GM12878 (cell line): ENCODE measurements at regions of chr22 and their contacts with region 1.

Region 1: DNA sequence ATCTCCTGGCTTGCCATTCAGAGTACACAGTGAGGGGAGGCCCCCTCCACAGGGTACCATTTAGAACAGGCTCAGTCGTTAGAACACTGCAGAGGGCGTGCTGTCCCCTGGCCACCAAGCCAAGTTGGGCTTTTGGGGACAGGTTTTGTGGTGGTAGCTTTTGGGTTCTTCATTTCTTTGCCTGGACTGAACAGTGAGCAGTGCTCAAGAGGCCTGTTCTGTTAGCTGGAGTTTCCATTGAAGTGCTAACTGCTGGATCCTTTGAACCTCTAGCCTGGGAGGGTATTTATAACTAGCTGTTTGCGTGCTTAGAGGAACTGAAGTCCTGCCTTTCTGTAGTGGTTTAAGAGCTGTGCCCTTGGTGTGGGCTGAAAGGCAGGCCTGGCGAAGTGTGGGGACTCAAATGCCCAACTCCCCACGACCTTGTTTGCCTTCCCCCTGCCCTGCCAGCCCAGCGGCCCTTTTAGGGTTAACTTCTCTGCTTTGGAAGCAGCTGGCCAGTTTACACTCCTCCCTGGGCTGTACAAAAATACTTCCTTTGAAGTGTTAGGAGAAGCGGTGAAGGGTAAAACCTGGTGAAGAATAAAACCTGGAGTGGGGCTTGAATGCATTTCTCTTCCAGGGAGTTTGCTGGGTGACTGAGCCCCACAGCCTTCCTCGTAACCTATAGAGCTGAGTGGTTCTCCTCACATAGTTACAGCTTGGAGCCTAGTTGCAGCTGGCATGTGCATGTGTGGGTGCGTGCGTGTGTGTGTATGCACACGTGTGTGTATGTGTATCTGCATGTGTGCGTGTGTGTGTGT is 34.6 kb downstream of the ZNRF3 start:
- DNase-seq: no peak
- ATAC-seq: peak; percentile 27
- H3K4me3 ChIP-seq: no peak overlapping the region
- H3K27ac ChIP-seq: no peak overlapping the region
- H3K4me1 ChIP-seq: peaks cover 8% of the 10 kb centered on the region
- H3K27me3 ChIP-seq: no peaks in the 10 kb centered on the region; a peak in 1 of 4 replicates
- CTCF ChIP-seq: no peak; a peak in 1 of 6 replicates
- EP300 ChIP-seq: no peak
- POLR2A ChIP-seq: no peak
- RAD21 ChIP-seq: no peak

Region 2: GRCh38 chr22:28855355-28856094 is 62.4 kb before region 1 on chr22:
- CTCF ChIA-PET with region 1: interaction called, 12 read pairs
- POLR2A ChIA-PET with region 1: no interaction called
- RAD21 ChIA-PET with region 1: interaction called, 4 read pairs
- SMC1A ChIA-PET with region 1: interaction called, 7 read pairs
- in situ Hi-C with region 1: no loop called
- intact Hi-C with region 1: no loop called
- DNase-seq: peak; percentile 27
- ATAC-seq: peak; percentile 79
- H3K4me3 ChIP-seq: no peak overlapping the region
- H3K27ac ChIP-seq: no peak overlapping the region
- H3K4me1 ChIP-seq: no peaks in the 10 kb centered on the region
- H3K27me3 ChIP-seq: no peaks in the 10 kb centered on the region; a peak in 1 of 4 replicates
- CTCF ChIP-seq: peak; percentile 85 to 90 (median 87); a peak in 5 of 6 replicates
- EP300 ChIP-seq: no peak
- POLR2A ChIP-seq: no peak
- RAD21 ChIP-seq: peak; percentile 94

Region 3: GRCh38 chr22:28904211-28904896 is 13.6 kb before region 1 on chr22:
- CTCF ChIA-PET with region 1: interaction called, 78 read pairs
- POLR2A ChIA-PET with region 1: interaction called, 16 read pairs
- RAD21 ChIA-PET with region 1: interaction called, 84 read pairs
- SMC1A ChIA-PET with region 1: interaction called, 117 read pairs
- in situ Hi-C with region 1: no loop called
- intact Hi-C with region 1: no loop called
- DNase-seq: no peak
- ATAC-seq: no peak
- H3K4me3 ChIP-seq: no peak overlapping the region
- H3K27ac ChIP-seq: no peak overlapping the region
- H3K4me1 ChIP-seq: peaks cover 23% of the 10 kb centered on the region
- H3K27me3 ChIP-seq: no peaks in the 10 kb centered on the region; a peak in 1 of 4 replicates
- CTCF ChIP-seq: no peak
- EP300 ChIP-seq: no peak
- POLR2A ChIP-seq: no peak
- RAD21 ChIP-seq: no peak

Region 4: DNA sequence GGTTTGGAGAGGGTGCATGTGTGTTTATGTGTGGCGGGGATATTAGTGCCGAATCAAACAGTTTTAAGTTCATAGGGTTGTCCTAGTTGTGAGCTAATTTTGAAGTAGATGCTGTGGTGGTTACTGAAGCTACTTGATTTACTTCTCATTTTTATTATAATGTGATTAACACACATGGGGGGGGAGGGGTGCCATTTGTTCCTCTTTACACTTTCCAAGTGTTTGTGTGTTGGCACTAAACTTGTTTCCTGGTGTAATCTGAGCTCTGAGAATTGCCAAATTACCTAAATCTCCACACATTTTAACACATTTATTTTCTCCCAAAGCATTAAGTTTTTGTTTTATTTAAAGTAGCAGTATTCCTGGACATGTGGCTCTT is 25.5 kb after region 1 on chr22:
- CTCF ChIA-PET with region 1: interaction called, 7 read pairs
- POLR2A ChIA-PET with region 1: interaction called, 3 read pairs
- RAD21 ChIA-PET with region 1: interaction called, 6 read pairs
- SMC1A ChIA-PET with region 1: interaction called, 22 read pairs
- in situ Hi-C with region 1: no loop called
- intact Hi-C with region 1: no loop called
- DNase-seq: no peak
- ATAC-seq: no peak
- H3K4me3 ChIP-seq: no peak overlapping the region
- H3K27ac ChIP-seq: no peak overlapping the region
- H3K4me1 ChIP-seq: no peaks in the 10 kb centered on the region
- H3K27me3 ChIP-seq: no peaks in the 10 kb centered on the region
- CTCF ChIP-seq: no peak
- EP300 ChIP-seq: no peak
- POLR2A ChIP-seq: no peak
- RAD21 ChIP-seq: no peak

Region 5: GRCh38 chr22:28978158-28978557 is 60.2 kb after region 1 on chr22:
- CTCF ChIA-PET with region 1: interaction called, 4 read pairs
- POLR2A ChIA-PET with region 1: interaction called, 4 read pairs
- RAD21 ChIA-PET with region 1: interaction called, 35 read pairs
- SMC1A ChIA-PET with region 1: interaction called, 11 read pairs
- in situ Hi-C with region 1: no loop called
- intact Hi-C with region 1: loop called (anchors 2 kb)
- DNase-seq: no peak
- ATAC-seq: peak; percentile 57
- H3K4me3 ChIP-seq: no peak overlapping the region
- H3K27ac ChIP-seq: no peak overlapping the region
- H3K4me1 ChIP-seq: no peaks in the 10 kb centered on the region
- H3K27me3 ChIP-seq: 0 out of 4 replicates have a peak, but pooled peaks cover 0 to 5% of the 10 kb centered on the region in 2 experiments
- CTCF ChIP-seq: no peak
- EP300 ChIP-seq: no peak
- POLR2A ChIP-seq: no peak
- RAD21 ChIP-seq: no peak

Region 6: GRCh38 chr22:29018293-29019189 is 100.6 kb after region 1 on chr22:
- CTCF ChIA-PET with region 1: interaction called, 3 read pairs
- POLR2A ChIA-PET with region 1: interaction called, 5 read pairs
- RAD21 ChIA-PET with region 1: interaction called, 49 read pairs
- SMC1A ChIA-PET with region 1: interaction called, 10 read pairs
- in situ Hi-C with region 1: no loop called
- intact Hi-C with region 1: no loop called
- DNase-seq: no peak
- ATAC-seq: no peak
- H3K4me3 ChIP-seq: no peak overlapping the region
- H3K27ac ChIP-seq: no peak overlapping the region
- H3K4me1 ChIP-seq: no peaks in the 10 kb centered on the region
- H3K27me3 ChIP-seq: 0 out of 4 replicates have a peak, but pooled peaks cover 0 to 2% of the 10 kb centered on the region in 2 experiments
- CTCF ChIP-seq: no peak
- EP300 ChIP-seq: no peak
- POLR2A ChIP-seq: no peak
- RAD21 ChIP-seq: no peak

Region 7: DNA sequence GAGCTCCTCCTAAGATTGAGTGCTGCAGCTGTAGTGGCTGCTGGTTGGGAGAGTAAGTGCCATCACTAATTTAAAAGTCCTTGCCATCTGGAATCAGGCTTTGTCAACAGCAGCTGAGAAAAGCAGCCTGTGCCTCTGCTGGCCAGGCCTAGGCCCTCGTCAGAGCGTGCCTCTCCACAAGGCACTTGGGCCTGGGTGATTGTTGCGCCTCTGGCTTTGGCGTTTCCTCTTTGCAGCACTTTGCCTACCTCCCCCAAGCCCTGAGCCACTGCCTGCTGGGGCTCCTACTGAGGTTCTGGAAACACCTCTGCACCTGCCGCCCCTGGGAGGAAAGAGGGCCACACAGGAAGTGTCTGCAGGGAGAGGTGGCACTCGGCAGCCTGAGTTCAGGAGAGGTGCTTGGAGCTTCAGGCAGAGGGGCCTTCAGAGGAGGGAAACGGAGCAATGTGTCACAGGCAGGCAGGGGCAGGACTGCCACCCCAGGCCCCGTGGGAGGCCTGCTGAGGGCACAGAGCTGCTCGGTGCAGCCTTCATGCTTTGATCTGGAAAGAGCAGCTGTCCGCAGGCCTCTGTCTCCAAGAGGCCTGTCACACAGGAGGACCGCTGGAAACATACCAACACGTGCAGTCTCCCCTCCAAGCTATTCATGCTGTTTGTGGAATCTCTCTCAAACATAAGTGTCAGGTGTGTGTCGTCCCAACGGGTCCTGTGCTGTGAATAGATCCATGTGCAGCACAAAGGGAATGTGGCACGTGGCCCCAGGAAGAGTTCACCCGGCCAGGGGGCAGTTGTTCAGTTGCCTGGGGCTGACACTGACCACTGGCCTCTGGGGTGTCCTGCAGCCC is 226.2 kb after region 1 on chr22:
- CTCF ChIA-PET with region 1: no interaction called
- POLR2A ChIA-PET with region 1: no interaction called
- RAD21 ChIA-PET with region 1: no interaction called
- SMC1A ChIA-PET with region 1: no interaction called
- in situ Hi-C with region 1: no loop called
- intact Hi-C with region 1: no loop called
- DNase-seq: no peak
- ATAC-seq: no peak
- H3K4me3 ChIP-seq: no peak overlapping the region
- H3K27ac ChIP-seq: no peak overlapping the region
- H3K4me1 ChIP-seq: no peaks in the 10 kb centered on the region
- H3K27me3 ChIP-seq: no peaks in the 10 kb centered on the region; a peak in 2 of 4 replicates
- CTCF ChIP-seq: no peak
- EP300 ChIP-seq: no peak
- POLR2A ChIP-seq: no peak
- RAD21 ChIP-seq: no peak